Endothelial cell of umbilical vein (primary cell): ENCODE measurements at regions of chr1 and their contacts with region 1.

Region 1: GRCh38 chr1:246002725-246003441 is 504.2 kb downstream of the SMYD3 start:
- DNase-seq: peak; percentile 83
- H3K4me3 ChIP-seq: no peak overlapping the region
- H3K27ac ChIP-seq: no peak overlapping the region
- H3K4me1 ChIP-seq: no peaks in the 10 kb centered on the region
- H3K27me3 ChIP-seq: no peaks in the 10 kb centered on the region
- CTCF ChIP-seq: peak; percentile 70 to 77
- POLR2A ChIP-seq: no peak

Region 2: GRCh38 chr1:245797592-245798348 is 205.1 kb before region 1 on chr1:
- CTCF ChIA-PET with region 1: no interaction called
- POLR2A ChIA-PET with region 1: no interaction called
- dilution Hi-C with region 1: no loop called
- intact Hi-C with region 1: loop called (anchors 10 kb)
- DNase-seq: no peak
- H3K4me3 ChIP-seq: no peak overlapping the region
- H3K27ac ChIP-seq: no peak overlapping the region
- H3K4me1 ChIP-seq: no peaks in the 10 kb centered on the region
- H3K27me3 ChIP-seq: no peaks in the 10 kb centered on the region
- CTCF ChIP-seq: peak; percentile 24 to 30
- POLR2A ChIP-seq: no peak